ENCODE measurements at regions of chr7 and their contacts with region 1.

Region 1: DNA sequence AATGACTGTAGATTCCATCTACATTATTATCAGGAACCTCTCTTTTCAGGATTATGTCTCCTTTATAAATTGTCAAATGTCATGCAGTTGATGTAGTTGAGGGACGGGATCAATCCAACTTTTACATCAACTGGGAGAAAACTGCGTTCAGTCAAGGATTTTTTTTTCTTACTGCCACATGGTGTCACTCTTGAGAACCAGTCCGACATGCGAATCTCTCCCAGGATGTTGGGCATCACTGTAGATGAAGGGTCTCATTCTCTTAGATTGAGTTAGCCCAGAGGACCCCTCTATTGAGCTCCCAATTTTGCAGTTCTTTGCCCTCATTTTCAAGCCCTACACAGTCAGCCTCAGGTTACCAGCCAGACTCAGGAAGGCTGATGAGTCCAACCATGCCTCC is 120.3 kb upstream of the PTPRZ1 start:
- DNase-seq: no peak
- ATAC-seq: no peak

Region 2: GRCh38 chr7:121697731-121698316 is 54.9 kb before region 1 on chr7:
- intact Hi-C with region 1: no loop called
- DNase-seq: no peak
- ATAC-seq: no peak

Region 3: GRCh38 chr7:121774563-121774962 is 21.9 kb after region 1 on chr7:
- intact Hi-C with region 1: no loop called
- DNase-seq: no peak
- ATAC-seq: no peak

Region 4: DNA sequence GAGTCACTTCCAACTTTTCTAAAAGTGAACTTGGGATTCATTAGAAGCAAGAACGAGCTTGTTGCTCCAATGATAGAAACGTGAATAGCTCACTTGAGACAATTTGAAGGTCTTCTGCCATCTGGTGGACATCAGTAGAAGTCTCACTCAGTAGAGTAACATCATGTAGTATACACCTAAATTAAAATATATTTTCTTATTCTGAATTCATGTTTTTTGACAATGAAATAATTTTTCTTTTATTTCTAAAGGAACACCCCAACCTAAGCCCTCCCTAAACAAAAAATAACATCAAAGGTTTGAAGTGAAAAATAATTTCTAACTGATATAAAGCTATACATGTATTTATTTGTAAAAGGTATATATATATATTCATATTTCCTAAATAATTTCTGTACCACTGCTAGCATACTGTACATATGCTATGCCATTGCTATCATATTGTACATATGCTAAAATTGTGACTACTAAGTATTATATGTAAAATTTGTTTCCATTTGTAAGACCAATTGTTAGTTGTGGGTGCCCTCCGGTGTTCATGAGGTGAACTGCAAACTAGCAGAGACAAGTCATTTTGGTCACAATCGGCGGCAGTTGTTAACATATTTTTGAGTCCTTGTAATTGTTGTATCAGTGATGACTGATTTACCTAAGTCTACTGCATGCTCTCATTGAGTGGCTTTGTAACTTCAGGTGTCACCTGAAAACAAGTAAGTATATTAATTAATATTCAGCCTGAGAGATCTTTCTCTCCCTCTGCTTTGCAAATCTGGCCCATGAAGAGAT is 242.1 kb after region 1 on chr7:
- intact Hi-C with region 1: loop called (anchors 10 kb)
- DNase-seq: peak; percentile 66
- ATAC-seq: no peak